MCF 10A (cell line): ENCODE measurements at regions of chrX and their contacts with region 1.

Region 1: GRCh38 chrX:31546130-31546529 is 474.3 kb upstream of the FTHL17 start:
- DNase-seq: peak; percentile 77
- H3K4me3 Mint-ChIP-seq: no peak overlapping the region
- H3K27ac Mint-ChIP-seq: peak overlapping the region; percentile 26
- H3K4me1 Mint-ChIP-seq: no peaks in the 10 kb centered on the region
- H3K27me3 Mint-ChIP-seq: no peaks in the 10 kb centered on the region
- CTCF ChIP-seq: no peak

Region 2: DNA sequence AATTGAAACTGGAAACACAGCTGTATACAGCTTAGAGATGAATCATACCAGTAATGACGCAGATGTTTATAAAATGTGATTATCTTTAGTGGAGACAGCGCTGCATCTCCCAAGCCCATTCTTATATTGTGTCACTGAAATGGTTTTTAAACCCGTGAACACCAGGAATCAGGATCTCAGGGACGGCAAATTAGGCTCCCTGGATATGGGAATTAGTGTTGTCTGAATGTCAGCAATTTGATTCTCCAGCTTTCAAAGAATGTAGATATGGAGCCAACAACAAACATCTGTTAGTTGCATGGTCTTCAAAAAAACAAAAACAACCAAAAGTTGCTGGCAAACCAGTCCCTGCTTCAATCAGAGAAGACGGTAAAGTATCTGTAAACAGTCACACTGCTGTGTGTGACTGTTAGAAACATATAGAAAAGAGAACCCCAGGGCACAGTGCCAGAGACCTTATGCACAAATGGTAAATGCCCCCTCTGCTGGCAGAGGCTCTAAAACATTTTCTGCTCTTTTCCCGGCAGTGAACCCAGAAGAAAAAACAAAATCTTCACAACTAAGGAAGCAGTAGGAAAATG is 122.4 kb before region 1 on chrX:
- CTCF ChIA-PET with region 1: no interaction called
- POLR2A ChIA-PET with region 1: no interaction called
- intact Hi-C with region 1: no loop called
- DNase-seq: peak; percentile 71
- H3K4me3 Mint-ChIP-seq: no peak overlapping the region
- H3K27ac Mint-ChIP-seq: no peak overlapping the region
- H3K4me1 Mint-ChIP-seq: peaks cover 8% of the 10 kb centered on the region
- H3K27me3 Mint-ChIP-seq: peaks cover 17% of the 10 kb centered on the region
- CTCF ChIP-seq: peak; percentile 31

Region 3: DNA sequence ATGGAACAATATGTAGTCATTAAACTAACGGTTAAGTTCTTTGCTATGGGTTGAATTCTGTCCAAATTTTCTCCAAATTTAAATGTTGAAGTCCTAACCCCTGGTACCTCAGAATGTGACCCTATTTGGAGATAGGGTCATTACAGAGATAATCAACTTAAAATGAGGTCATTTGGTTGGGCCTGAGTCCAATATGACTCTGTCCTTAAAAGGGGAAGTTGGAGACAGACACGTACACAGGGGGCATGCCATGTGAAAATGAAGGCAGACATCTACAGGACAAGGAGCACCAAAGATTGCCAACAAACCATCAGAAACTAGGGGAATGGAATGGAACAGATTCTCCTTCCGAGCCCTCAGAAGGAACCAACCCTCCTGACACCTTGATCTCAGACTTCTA is 17.7 kb after region 1 on chrX:
- CTCF ChIA-PET with region 1: no interaction called
- POLR2A ChIA-PET with region 1: no interaction called
- intact Hi-C with region 1: no loop called
- DNase-seq: no peak
- H3K4me3 Mint-ChIP-seq: no peak overlapping the region
- H3K27ac Mint-ChIP-seq: no peak overlapping the region
- H3K4me1 Mint-ChIP-seq: peaks cover 6% of the 10 kb centered on the region
- H3K27me3 Mint-ChIP-seq: peaks cover 27% of the 10 kb centered on the region
- CTCF ChIP-seq: no peak

Region 4: GRCh38 chrX:31609130-31609529 is 63.0 kb after region 1 on chrX:
- CTCF ChIA-PET with region 1: no interaction called
- POLR2A ChIA-PET with region 1: no interaction called
- intact Hi-C with region 1: loop called (anchors 1 kb)
- DNase-seq: peak; percentile 88
- H3K4me3 Mint-ChIP-seq: no peak overlapping the region
- H3K27ac Mint-ChIP-seq: peak overlapping the region; percentile 55
- H3K4me1 Mint-ChIP-seq: peaks cover 16% of the 10 kb centered on the region
- H3K27me3 Mint-ChIP-seq: no peaks in the 10 kb centered on the region
- CTCF ChIP-seq: no peak

Region 5: DNA sequence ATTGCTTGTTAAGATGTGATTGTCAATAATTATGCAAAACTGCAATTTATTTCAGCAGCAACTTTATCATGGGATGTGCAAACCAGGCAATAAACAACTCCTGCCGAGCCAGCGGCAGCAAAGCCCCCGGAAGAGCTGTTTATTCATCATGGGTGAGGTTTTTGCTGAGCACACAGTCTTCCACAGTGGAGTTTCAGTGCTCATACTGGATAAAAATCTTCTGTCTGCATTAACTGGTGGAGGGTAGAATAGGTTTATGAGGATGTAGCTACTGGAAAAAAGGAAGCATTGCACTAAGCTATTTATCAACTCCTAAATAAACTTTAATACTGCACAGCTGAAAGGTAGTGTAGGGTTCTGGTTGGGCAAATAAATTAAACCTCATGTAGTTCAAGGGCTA is 83.1 kb after region 1 on chrX:
- CTCF ChIA-PET with region 1: no interaction called
- POLR2A ChIA-PET with region 1: no interaction called
- intact Hi-C with region 1: no loop called
- DNase-seq: no peak
- H3K4me3 Mint-ChIP-seq: no peak overlapping the region
- H3K27ac Mint-ChIP-seq: no peak overlapping the region
- H3K4me1 Mint-ChIP-seq: no peaks in the 10 kb centered on the region
- H3K27me3 Mint-ChIP-seq: peaks cover 25% of the 10 kb centered on the region
- CTCF ChIP-seq: no peak

Region 6: GRCh38 chrX:32483534-32484136 is 937.5 kb after region 1 on chrX:
- CTCF ChIA-PET with region 1: no interaction called
- POLR2A ChIA-PET with region 1: no interaction called
- intact Hi-C with region 1: no loop called
- DNase-seq: no peak
- H3K4me3 Mint-ChIP-seq: no peak overlapping the region
- H3K27ac Mint-ChIP-seq: no peak overlapping the region
- H3K4me1 Mint-ChIP-seq: no peaks in the 10 kb centered on the region
- H3K27me3 Mint-ChIP-seq: peaks cover 27% of the 10 kb centered on the region
- CTCF ChIP-seq: peak; percentile 33